Gastrocnemius medialis (tissue), 4 donors: ENCODE measurements at regions of chr5 and their contacts with region 1.

Region 1: GRCh38 chr5:67520161-67520908 is 323.7 kb upstream of the CD180 start:
- DNase-seq: no peak
- ATAC-seq: no peak
- H3K4me3 ChIP-seq: no peak overlapping the region
- H3K27ac ChIP-seq: no peak overlapping the region
- H3K4me1 ChIP-seq: no peaks in the 10 kb centered on the region
- H3K27me3 ChIP-seq: no peaks in the 10 kb centered on the region
- CTCF ChIP-seq: no peak
- POLR2A ChIP-seq: no peak

Region 2: DNA sequence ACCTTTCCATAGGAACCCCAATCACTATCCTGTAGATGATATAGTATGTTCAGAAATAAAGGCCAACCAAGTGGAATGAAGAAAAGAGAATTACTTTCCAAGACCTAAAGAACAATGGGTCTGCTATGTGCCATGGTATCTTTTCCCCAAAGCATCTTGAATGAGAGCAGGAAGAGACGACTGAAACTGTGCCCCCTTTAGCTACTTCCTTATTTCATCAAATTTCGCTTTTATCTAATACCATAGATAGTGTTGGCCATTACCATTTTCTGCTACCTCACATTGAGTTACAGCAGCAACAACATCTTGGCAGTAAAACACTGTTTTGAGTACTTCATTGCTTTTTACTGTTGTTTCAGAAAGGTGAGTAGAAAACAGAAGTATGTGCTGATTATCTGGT is 590.3 kb before region 1 on chr5:
- in situ Hi-C with region 1: no loop called
- intact Hi-C with region 1: loop called (anchors 5 kb)
- DNase-seq: no peak
- ATAC-seq: no peak
- H3K4me3 ChIP-seq: no peak overlapping the region
- H3K27ac ChIP-seq: no peak overlapping the region
- H3K4me1 ChIP-seq: no peaks in the 10 kb centered on the region
- H3K27me3 ChIP-seq: no peaks in the 10 kb centered on the region
- CTCF ChIP-seq: no peak
- POLR2A ChIP-seq: no peak

Region 3: DNA sequence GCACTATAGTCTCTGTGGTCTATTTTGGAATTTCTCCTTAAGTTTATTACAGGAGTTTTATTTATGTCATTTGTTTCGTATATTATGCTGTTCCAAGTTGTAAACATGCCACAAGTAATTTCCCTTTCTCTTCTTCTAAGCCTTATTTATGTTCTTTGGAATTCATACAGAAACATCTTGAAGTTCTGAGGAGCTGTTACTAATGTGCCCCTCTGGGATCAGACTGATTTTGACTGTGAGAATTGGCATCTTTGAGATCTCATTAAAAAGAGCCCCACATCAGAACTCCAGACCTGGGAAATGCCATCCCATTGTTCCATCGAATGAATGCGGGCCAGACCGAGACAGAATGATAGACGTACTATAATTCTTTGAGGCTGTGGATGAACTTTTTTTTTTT is 184.9 kb before region 1 on chr5:
- in situ Hi-C with region 1: no loop called
- intact Hi-C with region 1: no loop called
- DNase-seq: no peak
- ATAC-seq: no peak
- H3K4me3 ChIP-seq: no peak overlapping the region
- H3K27ac ChIP-seq: no peak overlapping the region
- H3K4me1 ChIP-seq: no peaks in the 10 kb centered on the region
- H3K27me3 ChIP-seq: no peaks in the 10 kb centered on the region
- CTCF ChIP-seq: no peak
- POLR2A ChIP-seq: no peak